ENCODE measurements at regions of chr14 and their contacts with region 1.

Region 1: GRCh38 chr14:36373982-36374673 is 53.7 kb upstream of the MBIP start:
- DNase-seq: peak; percentile 46
- H3K4me3 ChIP-seq: no peak overlapping the region; a peak in 1 of 4 replicates
- H3K27ac ChIP-seq: no peak overlapping the region
- H3K4me1 ChIP-seq: no peaks in the 10 kb centered on the region
- H3K27me3 ChIP-seq: no peaks in the 10 kb centered on the region; the same call in 1 of the 2 replicates
- CTCF ChIP-seq: peak; percentile 87
- EP300 ChIP-seq: no peak
- RAD21 ChIP-seq: peak; percentile 77

Region 2: DNA sequence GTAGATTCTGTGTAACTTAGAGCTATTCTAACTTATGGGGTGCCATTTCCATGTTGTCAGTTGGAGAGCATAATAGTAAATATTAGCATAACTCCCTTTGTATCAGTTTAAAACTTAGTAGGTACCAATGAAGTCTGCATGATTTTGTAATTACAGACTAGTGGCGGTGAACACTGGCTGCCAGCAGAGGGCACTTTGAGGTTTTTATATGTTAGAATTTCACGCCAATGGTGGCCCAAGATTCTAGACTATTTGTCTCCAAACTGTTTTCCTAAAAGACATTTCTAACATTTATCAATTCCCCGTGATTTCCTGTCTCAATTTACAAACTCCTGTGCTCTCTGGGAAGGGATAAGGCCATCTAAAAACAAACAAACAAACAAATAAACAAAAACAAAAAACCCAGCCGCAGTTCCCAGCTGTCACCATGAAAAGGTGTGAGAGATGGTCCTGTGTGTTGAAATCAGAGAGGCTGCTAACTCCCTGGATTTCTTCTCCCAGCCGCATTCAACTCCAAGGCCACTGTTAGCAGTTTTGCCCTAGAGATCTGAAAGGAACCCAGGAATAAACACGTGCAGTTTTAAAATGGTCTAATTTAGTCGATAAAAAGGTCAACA is 490.3 kb before region 1 on chr14:
- CTCF ChIA-PET with region 1: interaction called, 12 read pairs
- POLR2A ChIA-PET with region 1: no interaction called
- DNase-seq: peak; percentile 37
- H3K4me3 ChIP-seq: no peak overlapping the region
- H3K27ac ChIP-seq: no peak overlapping the region
- H3K4me1 ChIP-seq: peaks cover 7 to 8% of the 10 kb centered on the region in 2 experiments
- H3K27me3 ChIP-seq: no peaks in the 10 kb centered on the region
- CTCF ChIP-seq: peak; percentile 78
- EP300 ChIP-seq: no peak
- RAD21 ChIP-seq: peak; percentile 61

Region 3: DNA sequence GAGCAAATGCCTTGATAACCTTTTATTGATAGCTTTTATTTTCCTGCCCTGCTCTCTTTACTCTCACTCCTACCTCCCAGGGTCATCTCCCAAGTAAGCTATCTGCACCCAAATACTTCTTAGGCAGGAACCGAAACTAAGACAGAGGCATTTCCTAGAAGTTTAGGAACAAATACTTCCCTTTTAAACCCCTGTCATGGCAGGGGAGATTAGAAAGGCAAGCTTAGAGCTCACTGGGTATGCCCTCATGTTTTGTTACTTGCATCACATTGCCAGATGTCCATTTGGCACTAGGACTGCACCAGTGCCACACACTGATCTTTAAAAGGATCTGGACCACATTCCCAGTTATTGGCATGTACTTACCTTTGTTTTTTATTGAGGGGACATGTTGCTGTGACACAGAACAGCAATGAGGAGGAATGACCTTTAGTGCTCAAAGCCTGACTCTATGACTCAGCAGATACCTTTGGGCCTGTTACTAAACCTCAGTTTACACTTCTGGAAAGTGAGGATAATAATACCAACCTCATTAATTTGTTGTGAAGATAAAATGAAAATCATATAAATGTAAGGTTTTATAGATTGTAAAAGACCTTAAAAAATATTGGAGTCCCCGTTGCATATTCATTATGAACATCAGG is 12.8 kb before region 1 on chr14:
- CTCF ChIA-PET with region 1: interaction called, 13 read pairs
- POLR2A ChIA-PET with region 1: no interaction called
- DNase-seq: no peak
- H3K4me3 ChIP-seq: no peak overlapping the region
- H3K27ac ChIP-seq: no peak overlapping the region
- H3K4me1 ChIP-seq: no peaks in the 10 kb centered on the region
- H3K27me3 ChIP-seq: no peaks in the 10 kb centered on the region; the same call in 1 of the 2 replicates
- CTCF ChIP-seq: no peak
- EP300 ChIP-seq: no peak
- RAD21 ChIP-seq: no peak

Measured in SK-N-SH (cell line).